KBM-7 (cell line): ENCODE measurements at regions of chrX and their contacts with region 1.

Region 1: DNA sequence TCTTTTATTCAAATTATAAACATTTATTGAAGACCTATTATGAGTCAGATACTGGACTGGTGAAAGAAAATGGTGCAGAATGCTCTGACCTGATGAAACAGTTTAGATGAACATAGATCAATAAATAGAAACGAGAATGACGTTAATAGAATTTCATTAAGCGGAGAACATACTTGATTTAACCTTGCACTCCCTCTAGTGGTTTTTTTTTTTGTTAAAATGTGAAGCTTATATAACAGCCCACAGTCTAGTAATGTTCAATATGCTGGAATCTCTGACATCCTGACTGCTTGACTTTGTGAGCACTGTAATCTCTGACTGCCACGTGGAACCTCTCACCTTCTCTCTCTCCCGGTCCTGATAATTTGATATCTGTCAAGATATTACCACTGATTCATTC is 32.3 kb downstream of the HDAC8 start:
- DNase-seq: peak; percentile 37

Region 2: GRCh38 chrX:71828086-71828485 is 712.2 kb before region 1 on chrX:
- in situ Hi-C with region 1: no loop called
- DNase-seq: no peak

Region 3: GRCh38 chrX:72306851-72307645 is 233.3 kb before region 1 on chrX:
- in situ Hi-C with region 1: loop called (anchors 10 kb)
- DNase-seq: peak; percentile 91